ENCODE measurements at regions of chr4 and their contacts with region 1.

Region 1: DNA sequence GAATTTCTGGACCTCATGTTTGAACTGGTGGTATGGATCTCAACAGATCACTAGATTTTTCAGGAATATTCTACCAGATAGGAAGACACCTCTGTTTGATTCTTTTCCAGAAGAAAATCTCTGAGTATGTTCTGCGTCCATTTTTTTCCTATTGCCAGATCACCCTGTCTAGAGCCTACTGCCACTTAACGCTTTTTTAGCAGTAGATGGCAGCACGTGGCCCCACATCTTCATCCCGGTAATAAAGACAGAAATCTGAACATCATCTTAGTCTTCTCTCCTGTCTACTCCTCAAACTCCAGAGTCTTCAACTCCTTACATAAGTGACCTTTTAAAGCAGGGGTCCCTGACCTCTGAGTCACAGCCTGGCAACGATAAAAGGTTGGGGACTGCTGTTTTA is 184.7 kb downstream of the TMA16 start:
- DNase-seq: peak; percentile 55
- ATAC-seq: peak; percentile 80
- H3K4me3 ChIP-seq: no peak overlapping the region
- H3K27ac ChIP-seq: no peak overlapping the region
- H3K4me1 ChIP-seq: peaks cover 5% of the 10 kb centered on the region
- H3K27me3 ChIP-seq: no peaks in the 10 kb centered on the region
- CTCF ChIP-seq: peak; percentile 63

Region 2: GRCh38 chr4:163815776-163816175 is 136.6 kb after region 1 on chr4:
- CTCF ChIA-PET with region 1: no interaction called
- POLR2A ChIA-PET with region 1: no interaction called
- intact Hi-C with region 1: no loop called
- DNase-seq: no peak
- ATAC-seq: no peak
- H3K4me3 ChIP-seq: no peak overlapping the region
- H3K27ac ChIP-seq: no peak overlapping the region
- H3K4me1 ChIP-seq: peaks cover 7% of the 10 kb centered on the region
- H3K27me3 ChIP-seq: no peaks in the 10 kb centered on the region
- CTCF ChIP-seq: no peak

Region 3: GRCh38 chr4:163858515-163858914 is 179.3 kb after region 1 on chr4:
- CTCF ChIA-PET with region 1: no interaction called
- POLR2A ChIA-PET with region 1: no interaction called
- intact Hi-C with region 1: no loop called
- DNase-seq: no peak
- ATAC-seq: no peak
- H3K4me3 ChIP-seq: no peak overlapping the region
- H3K27ac ChIP-seq: no peak overlapping the region
- H3K4me1 ChIP-seq: no peaks in the 10 kb centered on the region
- H3K27me3 ChIP-seq: no peaks in the 10 kb centered on the region
- CTCF ChIP-seq: no peak

Region 4: GRCh38 chr4:164748375-164748774 is 1069.2 kb after region 1 on chr4:
- CTCF ChIA-PET with region 1: no interaction called
- POLR2A ChIA-PET with region 1: no interaction called
- intact Hi-C with region 1: loop called (anchors 5 kb)
- DNase-seq: peak; percentile 52
- ATAC-seq: no peak
- H3K4me3 ChIP-seq: no peak overlapping the region
- H3K27ac ChIP-seq: no peak overlapping the region
- H3K4me1 ChIP-seq: peaks cover 4% of the 10 kb centered on the region; the same call in 1 of the 2 replicates
- H3K27me3 ChIP-seq: no peaks in the 10 kb centered on the region
- CTCF ChIP-seq: peak; percentile 54